ENCODE measurements at regions of chr1 and their contacts with region 1.

Region 1: GRCh38 chr1:6359216-6360116 is 34.1 kb downstream of the ACOT7 start:
- DNase-seq: peak; percentile 76
- ATAC-seq: peak; percentile 83
- H3K4me3 Mint-ChIP-seq: peak overlapping the region; percentile 57
- H3K27ac Mint-ChIP-seq: peak overlapping the region; percentile 86
- H3K4me1 Mint-ChIP-seq: peaks cover 55% of the 10 kb centered on the region
- H3K27me3 Mint-ChIP-seq: no peaks in the 10 kb centered on the region

Region 2: DNA sequence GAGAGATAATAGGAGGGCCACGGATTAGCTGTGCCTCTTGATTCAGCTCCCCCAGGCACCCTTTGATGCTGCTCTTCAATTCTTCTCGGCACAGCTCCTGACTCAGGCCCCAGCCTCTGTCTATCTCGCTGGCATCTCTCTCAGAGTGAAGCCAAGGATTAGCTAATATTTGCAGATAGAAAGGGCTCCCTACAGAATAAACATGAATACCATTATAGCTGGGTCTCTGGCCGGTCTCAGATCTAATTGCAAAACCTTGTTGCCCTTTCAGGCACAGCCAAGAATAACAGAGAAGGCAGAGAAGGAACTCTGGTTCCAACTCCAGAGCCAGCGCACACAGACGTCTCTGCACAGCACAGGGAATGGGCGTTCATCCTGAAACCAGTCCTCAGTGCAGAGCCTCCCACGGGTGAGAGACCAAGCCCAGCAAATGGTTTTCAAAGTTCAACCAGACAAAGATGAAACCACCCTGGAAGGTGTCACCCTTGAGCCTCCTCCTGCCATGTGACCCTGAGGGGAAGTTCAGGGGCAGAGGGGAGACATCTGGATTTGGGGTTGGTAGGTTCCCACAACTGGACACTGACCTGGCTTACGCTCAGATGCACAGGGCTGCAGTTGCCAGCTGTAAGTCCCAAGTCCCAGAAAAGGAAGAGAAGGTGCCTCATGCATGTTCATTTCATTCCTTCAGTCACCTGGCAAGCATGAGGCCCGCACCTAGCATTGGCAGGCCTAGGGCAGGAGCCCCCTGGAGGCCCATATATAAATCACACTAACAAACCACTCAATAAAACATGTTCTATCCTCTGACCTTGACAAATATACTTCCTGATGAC is 761.3 kb before region 1 on chr1:
- CTCF ChIA-PET with region 1: no interaction called
- POLR2A ChIA-PET with region 1: no interaction called
- intact Hi-C with region 1: no loop called
- DNase-seq: no peak
- ATAC-seq: no peak
- H3K4me3 Mint-ChIP-seq: no peak overlapping the region
- H3K27ac Mint-ChIP-seq: no peak overlapping the region
- H3K4me1 Mint-ChIP-seq: no peaks in the 10 kb centered on the region
- H3K27me3 Mint-ChIP-seq: peaks cover 4% of the 10 kb centered on the region

Region 3: DNA sequence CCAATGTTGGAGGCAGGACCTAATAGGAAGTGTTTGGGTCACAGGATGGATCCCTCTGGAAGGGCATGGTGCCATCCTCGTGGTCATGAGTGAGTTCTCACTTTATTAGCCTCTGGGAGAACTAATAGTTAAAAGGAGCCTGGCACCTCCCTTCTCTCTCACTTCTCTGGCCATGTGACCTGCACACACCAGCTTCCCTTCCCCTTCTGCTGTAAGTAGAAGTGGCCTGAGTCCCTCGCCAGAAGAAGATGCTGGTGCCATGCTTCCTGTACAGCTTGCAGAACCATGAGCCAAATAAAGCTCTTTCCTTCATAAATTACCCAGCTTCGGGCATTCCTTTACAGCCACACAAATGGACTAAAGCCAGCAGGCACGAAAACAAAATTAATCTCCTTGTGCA is 10.5 kb after region 1 on chr1:
- CTCF ChIA-PET with region 1: no interaction called
- POLR2A ChIA-PET with region 1: no interaction called
- intact Hi-C with region 1: no loop called
- DNase-seq: no peak
- ATAC-seq: no peak
- H3K4me3 Mint-ChIP-seq: no peak overlapping the region
- H3K27ac Mint-ChIP-seq: no peak overlapping the region
- H3K4me1 Mint-ChIP-seq: peaks cover 10% of the 10 kb centered on the region
- H3K27me3 Mint-ChIP-seq: no peaks in the 10 kb centered on the region

Region 4: DNA sequence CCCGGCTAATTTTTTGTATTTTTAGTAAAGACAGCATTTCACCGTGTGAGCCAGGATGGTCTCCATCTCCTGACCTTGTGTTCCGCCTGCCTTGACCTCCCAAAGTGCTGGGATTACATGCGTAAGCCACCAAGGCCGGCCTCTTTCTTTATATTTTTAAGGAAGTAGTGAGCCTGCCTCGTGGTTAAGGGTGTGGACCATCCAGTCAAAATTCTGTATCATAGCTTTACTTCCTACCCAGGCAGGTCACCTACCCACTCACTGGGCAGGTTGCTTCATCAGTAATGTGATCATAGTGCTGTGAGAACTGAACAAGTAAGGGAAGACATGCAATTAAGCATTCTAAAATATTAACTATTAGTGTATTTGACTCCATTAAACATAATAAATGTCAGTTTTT is 42.2 kb after region 1 on chr1:
- CTCF ChIA-PET with region 1: interaction called, 14 read pairs
- POLR2A ChIA-PET with region 1: no interaction called
- intact Hi-C with region 1: no loop called
- DNase-seq: no peak
- ATAC-seq: no peak
- H3K4me3 Mint-ChIP-seq: no peak overlapping the region
- H3K27ac Mint-ChIP-seq: no peak overlapping the region
- H3K4me1 Mint-ChIP-seq: no peaks in the 10 kb centered on the region
- H3K27me3 Mint-ChIP-seq: peaks cover 2% of the 10 kb centered on the region

Region 5: GRCh38 chr1:6438047-6438525 is 78.6 kb after region 1 on chr1:
- CTCF ChIA-PET with region 1: interaction called, 11 read pairs
- POLR2A ChIA-PET with region 1: no interaction called
- intact Hi-C with region 1: no loop called
- DNase-seq: peak; percentile 85
- ATAC-seq: peak; percentile 72
- H3K4me3 Mint-ChIP-seq: no peak overlapping the region
- H3K27ac Mint-ChIP-seq: no peak overlapping the region
- H3K4me1 Mint-ChIP-seq: peaks cover 2% of the 10 kb centered on the region
- H3K27me3 Mint-ChIP-seq: peaks cover 16% of the 10 kb centered on the region

Region 6: GRCh38 chr1:6832531-6833188 is 473.2 kb after region 1 on chr1:
- CTCF ChIA-PET with region 1: no interaction called
- POLR2A ChIA-PET with region 1: no interaction called
- intact Hi-C with region 1: no loop called
- DNase-seq: no peak
- ATAC-seq: no peak
- H3K4me3 Mint-ChIP-seq: no peak overlapping the region
- H3K27ac Mint-ChIP-seq: no peak overlapping the region
- H3K4me1 Mint-ChIP-seq: peaks cover 4% of the 10 kb centered on the region
- H3K27me3 Mint-ChIP-seq: no peaks in the 10 kb centered on the region